ENCODE measurements at regions of chr11 and their contacts with region 1.

Region 1: GRCh38 chr11:123880914-123881313 is 4.6 kb downstream of the TMEM225 start:
- DNase-seq: no peak
- ATAC-seq: no peak
- H3K4me3 ChIP-seq: no peak overlapping the region
- H3K27ac ChIP-seq: no peak overlapping the region
- H3K4me1 ChIP-seq: no peaks in the 10 kb centered on the region
- H3K27me3 ChIP-seq: peaks cover 21% of the 10 kb centered on the region
- CTCF ChIP-seq: no peak
- POLR2A ChIP-seq: no peak
- RAD21 ChIP-seq: no peak

Region 2: DNA sequence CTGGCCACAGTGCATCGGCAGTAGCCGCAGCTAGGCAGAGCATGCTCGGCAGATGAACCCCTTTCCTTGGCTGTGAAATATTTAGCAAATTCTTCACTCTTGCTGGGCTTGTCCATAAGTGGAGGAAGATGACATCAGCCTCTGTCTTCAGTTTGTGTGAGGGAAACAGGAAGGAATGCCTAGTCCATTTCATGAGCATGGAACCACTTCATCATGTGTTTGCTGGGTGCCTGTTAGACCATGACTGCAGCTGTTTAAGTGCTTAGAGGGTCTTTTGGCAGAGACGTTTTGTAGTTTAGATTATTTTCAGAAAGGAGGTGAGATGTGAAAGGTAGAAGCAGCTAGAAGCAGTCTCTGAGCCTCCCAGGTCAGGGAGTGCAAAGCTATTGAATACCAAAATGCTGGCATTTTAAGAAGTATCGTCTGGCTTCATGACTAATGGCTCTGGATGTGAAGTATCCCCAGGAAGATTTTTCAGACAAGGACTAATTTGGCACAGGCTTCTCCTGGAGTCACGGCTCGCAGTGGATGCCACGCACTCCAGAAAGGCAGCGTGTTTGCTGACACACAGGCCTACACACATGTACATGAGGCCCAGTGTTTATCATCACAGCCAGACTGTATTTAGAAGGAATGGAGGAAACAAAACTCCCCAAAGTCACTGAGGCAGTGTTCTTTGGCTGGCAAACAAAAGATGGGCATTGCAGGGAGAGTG is 494.0 kb before region 1 on chr11:
- CTCF ChIA-PET with region 1: no interaction called
- POLR2A ChIA-PET with region 1: no interaction called
- RAD21 ChIA-PET with region 1: no interaction called
- intact Hi-C with region 1: no loop called
- DNase-seq: no peak
- ATAC-seq: no peak
- H3K4me3 ChIP-seq: no peak overlapping the region
- H3K27ac ChIP-seq: no peak overlapping the region
- H3K4me1 ChIP-seq: no peaks in the 10 kb centered on the region
- H3K27me3 ChIP-seq: no peaks in the 10 kb centered on the region
- CTCF ChIP-seq: no peak
- POLR2A ChIP-seq: no peak
- RAD21 ChIP-seq: no peak

Region 3: DNA sequence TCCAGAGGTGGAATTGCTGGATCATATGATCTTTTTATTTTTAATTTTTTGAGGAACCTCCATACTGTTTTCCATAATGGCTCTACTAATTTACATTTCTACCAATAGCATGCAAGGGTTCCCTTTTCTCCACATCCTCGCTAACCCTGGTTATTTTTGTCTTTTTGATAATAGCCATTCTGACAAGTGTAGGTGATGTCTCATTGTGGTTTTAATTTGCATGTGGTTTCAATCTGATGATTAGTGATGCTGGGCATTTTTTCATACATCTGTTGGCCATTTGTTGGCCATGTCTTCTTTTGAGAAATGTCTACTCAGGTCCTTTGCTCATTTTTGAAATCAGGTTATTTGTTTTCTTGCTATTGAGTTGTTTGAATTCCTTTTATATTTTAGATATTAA is 43.1 kb after region 1 on chr11:
- CTCF ChIA-PET with region 1: no interaction called
- POLR2A ChIA-PET with region 1: no interaction called
- RAD21 ChIA-PET with region 1: no interaction called
- intact Hi-C with region 1: loop called (anchors 5 kb)
- DNase-seq: no peak
- ATAC-seq: no peak
- H3K4me3 ChIP-seq: no peak overlapping the region
- H3K27ac ChIP-seq: no peak overlapping the region
- H3K4me1 ChIP-seq: no peaks in the 10 kb centered on the region
- H3K27me3 ChIP-seq: peaks cover 4% of the 10 kb centered on the region; the same call in 1 of the 2 replicates
- CTCF ChIP-seq: no peak
- POLR2A ChIP-seq: no peak
- RAD21 ChIP-seq: no peak

Region 4: DNA sequence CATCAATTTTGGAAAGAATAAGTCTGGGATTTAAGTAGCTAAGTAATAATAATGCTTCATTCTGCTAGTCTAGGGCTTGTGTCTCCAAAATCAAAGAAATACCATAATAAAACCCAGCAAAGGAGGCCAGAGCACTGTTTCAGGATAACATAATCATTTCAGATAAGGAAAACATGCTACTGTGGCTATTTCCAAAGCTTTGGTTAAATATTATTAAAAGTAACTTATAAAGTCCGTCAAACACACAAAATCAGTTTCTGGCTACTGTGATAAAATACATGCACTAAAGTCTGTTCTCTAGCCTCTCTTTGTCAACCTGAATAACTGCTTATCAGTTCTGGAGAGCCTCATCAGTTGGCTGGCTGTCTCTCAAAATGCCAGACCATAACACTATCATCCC is 64.2 kb after region 1 on chr11:
- CTCF ChIA-PET with region 1: no interaction called
- POLR2A ChIA-PET with region 1: no interaction called
- RAD21 ChIA-PET with region 1: no interaction called
- intact Hi-C with region 1: no loop called
- DNase-seq: no peak
- ATAC-seq: no peak
- H3K4me3 ChIP-seq: no peak overlapping the region
- H3K27ac ChIP-seq: no peak overlapping the region
- H3K4me1 ChIP-seq: no peaks in the 10 kb centered on the region
- H3K27me3 ChIP-seq: 0 out of 2 replicates have a peak, but pooled peaks cover 6% of the 10 kb centered on the region
- CTCF ChIP-seq: no peak
- POLR2A ChIP-seq: no peak
- RAD21 ChIP-seq: no peak

Measured in HCT116 (cell line).